ENCODE measurements at regions of chr1 and their contacts with region 1.

Region 1: GRCh38 chr1:30106125-30106524 is 617.3 kb downstream of the MATN1 start:
- DNase-seq: peak in 1 of 6 donors; percentile 63
- ATAC-seq: peak in 2 of 4 donors; percentile 53 to 62
- H3K4me3 ChIP-seq: no peak overlapping the region
- H3K27ac ChIP-seq: no peak overlapping the region
- H3K4me1 ChIP-seq: no peaks in the 10 kb centered on the region
- H3K27me3 ChIP-seq: no peaks in the 10 kb centered on the region
- CTCF ChIP-seq: peak in 1 of 4 donors; percentile 21

Region 2: DNA sequence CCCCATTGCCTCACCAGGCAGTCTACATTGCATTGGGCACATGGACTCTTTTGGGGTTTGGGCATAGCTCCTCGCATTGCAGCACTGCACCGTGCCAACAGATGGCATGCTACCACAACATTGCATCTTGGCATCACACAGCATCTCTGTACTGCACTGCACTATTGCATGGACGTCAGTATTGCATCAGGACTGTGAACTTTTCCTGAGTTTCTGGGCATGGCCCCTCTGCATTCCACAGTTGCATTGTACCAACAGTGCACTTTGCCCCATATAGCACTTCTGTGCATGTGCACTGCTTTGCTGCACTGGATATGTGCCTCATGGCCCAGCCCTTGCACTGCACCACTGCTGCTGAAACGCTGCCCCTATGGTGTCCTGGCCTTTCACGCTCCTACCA is 860.2 kb before region 1 on chr1:
- intact Hi-C with region 1: loop called in 1 of 3 experiments (anchors 5 kb)
- DNase-seq: no peak
- ATAC-seq: peak in 3 of 4 donors; percentile 66 to 76 (median 66)
- H3K4me3 ChIP-seq: no peak overlapping the region
- H3K27ac ChIP-seq: no peak overlapping the region
- H3K4me1 ChIP-seq: no peaks in the 10 kb centered on the region
- H3K27me3 ChIP-seq: no peaks in the 10 kb centered on the region
- CTCF ChIP-seq: peak in 1 of 4 donors; percentile 17

Region 3: GRCh38 chr1:29793101-29793546 is 313.0 kb before region 1 on chr1:
- intact Hi-C with region 1: loop called in 1 of 3 experiments (anchors 10 kb)
- DNase-seq: peak; percentile 58 to 92 (median 81)
- ATAC-seq: peak; percentile 50 to 96 (median 91)
- H3K4me3 ChIP-seq: no peak overlapping the region
- H3K27ac ChIP-seq: no peak overlapping the region
- H3K4me1 ChIP-seq: no peaks in the 10 kb centered on the region
- H3K27me3 ChIP-seq: no peaks in the 10 kb centered on the region
- CTCF ChIP-seq: peak; percentile 27 to 69 (median 61)